ENCODE measurements at regions of chr1 and their contacts with region 1.

Region 1: GRCh38 chr1:20151906-20152598 is 12.9 kb downstream of the PLA2G2F start:
- DNase-seq: peak; percentile 52 to 58
- ATAC-seq: peak; percentile 81 to 82
- H3K4me3 ChIP-seq: peak overlapping the region in 3 of 4 donors; percentile 32 to 50 (median 41)
- H3K27ac ChIP-seq: peak overlapping the region in 1 of 4 donors; percentile 52
- H3K4me1 ChIP-seq: peaks cover 3 to 4% of the 10 kb centered on the region in 2 donors
- H3K27me3 ChIP-seq: no peaks in the 10 kb centered on the region
- CTCF ChIP-seq: peak; percentile 86 to 95 (median 92)
- POLR2A ChIP-seq: no peak

Region 2: DNA sequence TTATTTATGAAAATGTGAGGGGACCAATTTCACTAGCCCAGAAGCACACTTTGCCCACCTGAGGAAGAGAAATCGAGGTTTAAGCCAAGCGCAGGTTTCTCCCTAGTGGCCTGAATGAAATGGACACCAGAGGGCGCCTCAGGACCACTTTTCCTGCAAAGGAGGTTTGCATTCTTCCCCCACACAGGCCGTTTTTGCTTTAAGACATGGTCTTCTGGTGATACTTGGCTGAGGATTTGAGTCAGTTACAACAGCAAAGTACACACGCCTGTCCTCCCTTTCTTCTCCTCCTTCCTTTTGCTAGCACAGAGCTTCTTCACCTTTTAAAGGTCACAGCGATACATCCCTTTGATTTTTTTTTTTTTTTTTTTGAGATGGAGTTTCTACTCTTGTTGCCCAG is 234.0 kb before region 1 on chr1:
- in situ Hi-C with region 1: loop called (anchors 5 to 10 kb)
- intact Hi-C with region 1: loop called (anchors 1 kb)
- DNase-seq: peak; percentile 38 to 62
- ATAC-seq: peak; percentile 66 to 77
- H3K4me3 ChIP-seq: no peak overlapping the region
- H3K27ac ChIP-seq: no peak overlapping the region
- H3K4me1 ChIP-seq: no peaks in the 10 kb centered on the region
- H3K27me3 ChIP-seq: no peaks in the 10 kb centered on the region
- CTCF ChIP-seq: peak; percentile 70 to 88 (median 81)
- POLR2A ChIP-seq: no peak

Region 3: GRCh38 chr1:19974822-19975416 is 177.1 kb before region 1 on chr1:
- in situ Hi-C with region 1: no loop called
- intact Hi-C with region 1: loop called (anchors 1 kb)
- DNase-seq: peak in 1 of 2 donors; percentile 18
- ATAC-seq: peak in 1 of 2 donors; percentile 35
- H3K4me3 ChIP-seq: no peak overlapping the region
- H3K27ac ChIP-seq: no peak overlapping the region
- H3K4me1 ChIP-seq: no peaks in the 10 kb centered on the region
- H3K27me3 ChIP-seq: no peaks in the 10 kb centered on the region
- CTCF ChIP-seq: peak in 4 of 5 experiments; percentile 29 to 54 (median 48)
- POLR2A ChIP-seq: no peak

Region 4: DNA sequence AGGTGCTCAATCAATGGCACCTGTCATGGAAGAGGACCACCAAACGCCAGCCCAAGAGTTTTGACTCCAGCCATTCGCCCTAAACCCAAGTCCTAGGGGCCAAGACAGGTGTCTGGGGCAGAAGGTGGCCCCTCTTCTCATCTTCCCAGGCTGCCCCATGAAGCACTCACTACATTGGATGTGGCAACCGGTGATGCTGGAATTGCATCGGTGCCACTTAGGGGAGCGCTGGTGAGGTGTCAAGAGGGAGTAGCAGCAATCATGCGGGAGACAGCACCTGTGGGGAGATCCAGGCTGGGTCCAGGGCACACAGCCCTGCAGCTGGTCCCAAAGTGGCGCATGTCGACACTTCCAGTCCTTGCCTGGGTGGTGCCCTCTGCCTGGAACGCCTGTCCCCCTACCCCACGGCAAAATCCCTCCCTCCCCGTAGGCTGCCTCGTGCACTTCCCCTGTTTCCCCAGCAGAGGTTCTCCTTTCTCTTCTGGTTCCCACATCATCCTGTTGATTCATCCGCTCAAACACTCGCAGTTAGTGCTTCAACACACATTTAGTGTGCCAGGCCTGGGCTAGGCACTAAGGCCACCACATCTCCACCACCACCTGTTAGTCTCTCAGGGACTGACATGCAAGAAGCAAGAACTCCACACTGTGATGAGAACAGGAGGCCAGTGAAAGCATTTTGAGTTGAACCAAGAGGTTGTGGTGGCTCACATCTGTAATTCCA is 51.3 kb before region 1 on chr1:
- in situ Hi-C with region 1: no loop called
- intact Hi-C with region 1: loop called (anchors 1 kb)
- DNase-seq: peak in 1 of 2 donors; percentile 21
- ATAC-seq: peak; percentile 61
- H3K4me3 ChIP-seq: no peak overlapping the region
- H3K27ac ChIP-seq: no peak overlapping the region
- H3K4me1 ChIP-seq: no peaks in the 10 kb centered on the region
- H3K27me3 ChIP-seq: no peaks in the 10 kb centered on the region
- CTCF ChIP-seq: peak in 4 of 5 experiments; percentile 38 to 56 (median 48)
- POLR2A ChIP-seq: no peak

Region 5: GRCh38 chr1:20124456-20125057 is 27.5 kb before region 1 on chr1:
- in situ Hi-C with region 1: no loop called
- intact Hi-C with region 1: loop called (anchors 2 kb)
- DNase-seq: no peak
- ATAC-seq: peak; percentile 74 to 80
- H3K4me3 ChIP-seq: no peak overlapping the region
- H3K27ac ChIP-seq: no peak overlapping the region
- H3K4me1 ChIP-seq: no peaks in the 10 kb centered on the region
- H3K27me3 ChIP-seq: peaks cover 0 to 3% (median 0%) of the 10 kb centered on the region in 3 donors
- CTCF ChIP-seq: no peak
- POLR2A ChIP-seq: no peak

Region 6: DNA sequence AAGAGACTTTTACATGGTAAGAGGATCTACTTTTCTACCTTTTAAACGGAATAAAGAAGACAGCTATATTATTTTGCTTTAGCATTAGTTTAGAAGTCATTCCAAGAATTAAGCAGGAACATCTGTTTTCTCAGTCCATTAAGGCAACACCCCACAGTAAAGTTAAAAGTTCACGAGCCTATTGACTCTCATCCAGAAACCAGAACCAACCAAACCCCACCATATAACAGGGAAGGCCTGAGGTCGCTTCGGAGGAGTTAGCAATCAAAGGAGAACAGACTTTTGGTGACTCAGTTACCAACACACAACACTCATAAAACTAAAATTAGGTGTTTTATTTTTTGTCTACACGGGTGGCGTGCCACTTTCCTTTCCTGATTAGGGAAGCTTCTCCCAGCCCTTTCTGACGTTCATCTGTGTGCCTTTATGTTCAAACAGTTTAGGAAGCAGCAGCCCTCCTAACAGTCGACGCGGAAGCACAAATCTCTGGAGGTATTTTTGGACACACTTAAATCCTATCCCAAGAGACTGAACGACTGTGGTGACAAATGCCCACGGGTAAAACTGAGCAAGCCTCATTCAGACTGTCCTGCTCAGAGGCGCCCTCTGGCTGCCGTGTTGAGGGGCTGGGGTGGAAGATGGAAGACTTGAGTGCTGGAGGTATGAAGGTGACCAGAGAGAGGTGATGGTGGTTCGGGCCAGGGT is 42.9 kb after region 1 on chr1:
- in situ Hi-C with region 1: no loop called
- intact Hi-C with region 1: loop called (anchors 1 kb)
- DNase-seq: peak; percentile 45 to 54
- ATAC-seq: peak; percentile 68 to 91
- H3K4me3 ChIP-seq: peak overlapping the region in 2 of 4 donors; percentile 14 to 37
- H3K27ac ChIP-seq: peak overlapping the region in 1 of 4 donors; percentile 45
- H3K4me1 ChIP-seq: peaks cover 4 to 22% of the 10 kb centered on the region in 2 donors
- H3K27me3 ChIP-seq: peaks cover 2 to 14% (median 3%) of the 10 kb centered on the region in 3 donors
- CTCF ChIP-seq: peak; percentile 60 to 82 (median 74)
- POLR2A ChIP-seq: no peak

Region 7: GRCh38 chr1:20250341-20250989 is 98.4 kb after region 1 on chr1:
- in situ Hi-C with region 1: no loop called
- intact Hi-C with region 1: no loop called
- DNase-seq: no peak
- ATAC-seq: no peak
- H3K4me3 ChIP-seq: no peak overlapping the region
- H3K27ac ChIP-seq: no peak overlapping the region
- H3K4me1 ChIP-seq: no peaks in the 10 kb centered on the region
- H3K27me3 ChIP-seq: peaks cover 0 to 4% (median 0%) of the 10 kb centered on the region in 3 donors
- CTCF ChIP-seq: no peak
- POLR2A ChIP-seq: no peak

Region 8: DNA sequence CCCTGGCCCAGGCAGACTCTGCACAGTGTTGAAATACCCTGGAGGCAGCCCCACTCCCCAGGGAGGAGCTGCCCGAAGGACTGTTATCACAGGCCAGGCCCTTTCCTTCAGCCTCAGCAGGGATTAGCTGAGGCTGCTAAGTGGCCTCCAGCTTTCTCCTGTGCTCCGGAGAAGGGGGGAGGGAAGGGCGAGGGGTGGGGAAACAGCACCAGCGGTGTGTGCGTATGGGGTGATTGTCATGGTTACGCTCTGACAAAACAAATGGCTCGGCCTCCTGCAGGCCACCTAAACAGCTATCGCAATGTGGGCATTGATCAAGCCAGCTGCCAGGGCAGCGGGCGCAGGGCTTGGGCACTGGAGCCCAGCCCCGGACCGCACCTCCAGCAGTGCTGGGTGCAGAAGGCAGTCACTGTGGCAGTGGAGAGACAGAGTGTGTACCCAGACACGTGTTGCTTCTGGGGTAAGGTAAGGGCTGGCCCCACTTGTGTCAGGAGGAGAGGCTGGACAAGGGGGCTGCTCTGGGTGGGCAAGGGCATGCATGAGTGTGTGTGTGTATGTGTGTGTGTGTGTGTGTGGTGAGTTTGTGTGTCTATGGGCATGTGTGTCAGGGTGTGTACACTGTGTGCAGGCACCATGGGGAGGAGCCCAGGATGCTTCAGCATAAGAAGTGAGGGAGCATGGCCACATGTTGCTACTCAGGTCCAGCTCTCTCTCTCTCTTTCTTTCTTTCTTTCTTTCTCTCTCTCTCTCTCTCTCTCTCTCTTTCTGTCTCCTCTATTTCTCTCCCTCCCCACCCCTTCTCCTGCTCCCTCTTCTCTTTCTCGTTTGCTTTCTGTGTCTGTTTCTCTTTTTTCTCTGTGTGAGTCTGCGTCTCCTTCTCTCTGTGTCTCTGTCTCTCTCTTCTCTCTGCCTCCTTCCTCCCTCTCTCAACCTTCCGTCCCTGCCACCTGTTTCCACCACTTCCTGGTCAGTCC is 138.9 kb after region 1 on chr1 and contains the start of gene VWA5B1:
- in situ Hi-C with region 1: no loop called
- intact Hi-C with region 1: no loop called
- DNase-seq: no peak
- ATAC-seq: no peak
- H3K4me3 ChIP-seq: no peak within 1 kb of the TSS
- H3K27ac ChIP-seq: no peak within 1 kb of the TSS
- H3K4me1 ChIP-seq: no peaks in the 10 kb centered on the region
- H3K27me3 ChIP-seq: peaks cover 13 to 16% (median 16%) of the 10 kb centered on the region in 3 donors
- CTCF ChIP-seq: no peak
- POLR2A ChIP-seq: no peak
- total RNA-seq, gene VWA5B1: 0.25 TPM in 1 of 4 donors, not detected in the others